ENCODE measurements at regions of chr3 and their contacts with region 1.

Region 1: GRCh38 chr3:186826976-186827731 is 15.4 kb upstream of the ADIPOQ start:
- DNase-seq: peak; percentile 59 to 95 (median 83)
- ATAC-seq: peak; percentile 93
- H3K4me3 ChIP-seq: peak overlapping the region; percentile 56 to 70
- H3K4me3 Mint-ChIP-seq: peak overlapping the region; percentile 75
- H3K27ac ChIP-seq: no peak overlapping the region
- H3K27ac Mint-ChIP-seq: no peak overlapping the region
- H3K4me1 ChIP-seq: peaks cover 21% of the 10 kb centered on the region
- H3K4me1 Mint-ChIP-seq: peaks cover 24% of the 10 kb centered on the region
- H3K27me3 ChIP-seq: peaks cover 14 to 26% of the 10 kb centered on the region in 2 experiments
- H3K27me3 Mint-ChIP-seq: peaks cover 50% of the 10 kb centered on the region
- CTCF ChIP-seq: no peak

Region 2: GRCh38 chr3:186108941-186109865 is 718.0 kb before region 1 on chr3 and contains the start of gene ETV5:
- CTCF ChIA-PET with region 1: no interaction called
- POLR2A ChIA-PET with region 1: no interaction called
- intact Hi-C with region 1: loop called in 1 of 2 experiments (anchors 5 kb)
- DNase-seq: peak; percentile 71 to 95 (median 85)
- ATAC-seq: peak; percentile 90
- H3K4me3 ChIP-seq: peak within 1 kb of the TSS; percentile 54 to 61
- H3K4me3 Mint-ChIP-seq: peak within 1 kb of the TSS; percentile 90
- H3K27ac ChIP-seq: no peak within 1 kb of the TSS
- H3K27ac Mint-ChIP-seq: peak within 1 kb of the TSS; percentile 78
- H3K4me1 ChIP-seq: peaks cover 34% of the 10 kb centered on the region
- H3K4me1 Mint-ChIP-seq: peaks cover 36% of the 10 kb centered on the region
- H3K27me3 ChIP-seq: peaks cover 33 to 43% of the 10 kb centered on the region in 2 experiments
- H3K27me3 Mint-ChIP-seq: peaks cover 77% of the 10 kb centered on the region
- CTCF ChIP-seq: no peak
- total RNA-seq, gene ETV5: 0.08 TPM in 1 of 2 experiments, not detected in the other

Region 3: DNA sequence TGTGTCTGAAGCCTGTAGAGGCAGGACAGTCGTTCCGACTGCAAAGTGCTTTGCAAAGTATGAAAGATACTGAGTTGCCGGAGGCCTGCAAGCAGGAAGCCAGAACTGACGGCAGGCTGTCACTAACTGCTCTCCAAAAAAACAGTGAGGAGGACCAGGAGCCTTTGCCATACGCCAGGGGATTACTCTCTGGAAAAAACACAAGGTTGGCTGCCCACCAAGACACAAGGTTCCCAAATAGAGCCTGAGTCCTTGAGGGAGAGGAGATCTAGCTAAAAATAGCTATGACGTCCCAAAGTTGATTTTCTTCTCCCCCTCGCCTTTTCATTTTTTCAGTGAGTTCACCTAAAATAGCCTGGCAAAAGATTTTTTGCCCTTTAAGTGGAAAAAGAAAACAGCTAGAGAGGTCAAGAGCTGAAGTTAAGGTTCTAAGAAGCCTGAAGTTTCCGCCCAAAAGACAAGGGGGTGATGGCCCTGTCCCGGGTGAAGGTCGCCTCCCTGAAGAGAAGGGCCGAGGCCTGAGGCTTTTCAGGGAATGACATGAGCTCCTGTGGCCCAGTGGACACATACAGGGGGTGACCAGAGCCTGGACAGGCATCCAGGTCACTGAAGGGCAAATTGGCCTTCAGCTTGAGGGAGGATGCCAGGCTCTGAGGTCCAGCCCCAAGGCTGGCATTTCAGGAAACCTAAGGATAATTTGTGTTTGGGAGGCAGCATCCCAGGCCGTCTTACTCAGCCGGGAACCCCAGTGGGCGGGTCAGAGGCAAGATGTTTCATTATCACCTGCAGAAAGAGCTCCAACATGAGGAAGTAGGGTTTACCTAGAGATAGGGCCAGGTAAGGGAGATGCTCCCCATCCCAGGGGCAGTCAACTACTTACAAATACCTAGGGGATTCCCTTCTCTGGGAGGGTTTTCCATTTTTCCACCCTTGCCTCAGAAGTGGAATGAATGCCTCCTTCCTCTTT is 420.2 kb before region 1 on chr3:
- CTCF ChIA-PET with region 1: no interaction called
- POLR2A ChIA-PET with region 1: no interaction called
- intact Hi-C with region 1: no loop called
- DNase-seq: no peak
- ATAC-seq: no peak
- H3K4me3 ChIP-seq: no peak overlapping the region
- H3K4me3 Mint-ChIP-seq: no peak overlapping the region
- H3K27ac ChIP-seq: no peak overlapping the region
- H3K27ac Mint-ChIP-seq: no peak overlapping the region
- H3K4me1 ChIP-seq: no peaks in the 10 kb centered on the region
- H3K4me1 Mint-ChIP-seq: no peaks in the 10 kb centered on the region
- H3K27me3 ChIP-seq: no peaks in the 10 kb centered on the region
- H3K27me3 Mint-ChIP-seq: no peaks in the 10 kb centered on the region
- CTCF ChIP-seq: no peak

Region 4: DNA sequence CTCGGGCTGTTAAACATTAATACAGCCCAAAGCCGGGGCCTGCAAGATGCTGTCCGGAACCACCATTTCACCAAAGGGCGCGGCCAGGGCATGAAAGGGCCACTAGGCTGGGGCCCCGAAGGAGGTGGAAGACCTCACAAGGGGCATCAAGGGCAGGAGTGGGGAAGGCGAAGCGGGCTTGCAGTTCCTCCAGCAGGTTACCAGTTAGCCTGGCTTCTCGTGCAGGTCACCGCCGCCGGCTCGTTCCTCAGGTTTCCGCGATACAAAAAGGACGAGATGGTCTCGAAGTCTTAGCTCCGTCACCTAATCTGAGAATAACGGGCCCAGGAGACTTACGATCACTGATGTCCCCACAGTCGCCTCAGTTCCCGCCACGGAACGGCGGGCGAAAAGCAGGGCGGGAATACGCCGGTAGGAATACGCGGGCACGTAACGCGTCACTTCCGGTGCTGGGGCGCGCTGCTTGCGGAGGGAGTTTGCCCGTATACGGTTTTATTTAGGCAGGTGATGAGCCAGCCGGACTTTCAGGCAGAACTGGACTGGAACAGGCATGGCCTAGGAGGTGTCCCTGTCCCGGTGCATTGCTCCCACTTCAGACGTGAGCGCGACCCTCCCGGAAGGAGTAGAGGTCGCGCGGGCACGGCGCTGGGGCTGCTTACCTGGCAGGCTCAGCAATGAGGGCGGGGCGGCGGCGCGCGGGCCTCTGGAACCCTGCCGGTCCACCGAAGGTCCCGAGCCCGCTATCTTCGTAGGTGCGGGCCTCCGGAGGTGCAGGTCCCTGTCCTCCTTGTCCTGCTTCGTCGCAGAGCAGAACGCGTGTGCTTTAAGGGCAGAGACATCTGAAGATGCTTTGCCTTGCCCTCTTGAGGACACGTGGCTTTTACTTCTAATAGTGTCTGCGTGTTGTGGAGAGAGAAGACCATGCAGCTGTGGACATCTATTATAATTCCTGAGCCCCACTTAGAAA is 20.8 kb before region 1 on chr3 and contains the start of gene RFC4:
- CTCF ChIA-PET with region 1: interaction called, 9 read pairs
- POLR2A ChIA-PET with region 1: no interaction called
- intact Hi-C with region 1: loop called in 1 of 2 experiments (anchors 1 kb)
- DNase-seq: peak; percentile 60 to 91 (median 85)
- ATAC-seq: peak; percentile 86
- H3K4me3 ChIP-seq: peak within 1 kb of the TSS; percentile 81 to 97
- H3K4me3 Mint-ChIP-seq: peak within 1 kb of the TSS; percentile 97
- H3K27ac ChIP-seq: peak within 1 kb of the TSS; percentile 89 to 92
- H3K27ac Mint-ChIP-seq: peak within 1 kb of the TSS; percentile 97
- H3K4me1 ChIP-seq: peaks cover 23% of the 10 kb centered on the region
- H3K4me1 Mint-ChIP-seq: peaks cover 22% of the 10 kb centered on the region
- H3K27me3 ChIP-seq: no peaks in the 10 kb centered on the region
- H3K27me3 Mint-ChIP-seq: no peaks in the 10 kb centered on the region
- CTCF ChIP-seq: no peak
- total RNA-seq, gene RFC4: 12.7 to 13.9 TPM

Measured in CD8-positive, alpha-beta T cell (primary cell).